ENCODE measurements at regions of chr22 and their contacts with region 1.

Region 1: DNA sequence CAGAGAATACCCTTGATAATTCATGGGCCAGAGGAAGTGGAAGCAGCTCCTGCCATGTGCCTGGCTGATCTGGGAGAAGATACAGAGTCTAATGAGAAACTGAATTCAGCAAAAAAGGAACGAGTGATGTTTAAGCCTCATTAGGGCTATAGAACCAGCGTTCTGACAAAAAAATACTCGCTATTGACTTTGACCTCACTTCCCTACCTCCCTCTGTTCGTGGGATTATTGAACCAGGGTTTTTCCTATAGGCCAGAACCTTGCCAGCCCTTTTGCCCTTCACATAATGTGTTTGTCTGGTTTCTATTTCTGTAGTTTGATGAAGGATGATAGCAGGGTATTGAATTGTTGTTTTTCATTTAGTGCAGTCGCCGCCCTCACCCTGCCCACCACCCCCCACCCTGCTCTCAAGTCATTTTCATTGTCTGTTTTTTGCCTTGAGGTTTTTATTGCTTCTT is 7.6 kb upstream of the RBFOX2 start:
- DNase-seq: no peak
- H3K4me3 ChIP-seq: no peak overlapping the region
- H3K27ac ChIP-seq: no peak overlapping the region
- H3K4me1 ChIP-seq: no peaks in the 10 kb centered on the region
- H3K27me3 ChIP-seq: no peaks in the 10 kb centered on the region
- CTCF ChIP-seq: no peak

Region 2: DNA sequence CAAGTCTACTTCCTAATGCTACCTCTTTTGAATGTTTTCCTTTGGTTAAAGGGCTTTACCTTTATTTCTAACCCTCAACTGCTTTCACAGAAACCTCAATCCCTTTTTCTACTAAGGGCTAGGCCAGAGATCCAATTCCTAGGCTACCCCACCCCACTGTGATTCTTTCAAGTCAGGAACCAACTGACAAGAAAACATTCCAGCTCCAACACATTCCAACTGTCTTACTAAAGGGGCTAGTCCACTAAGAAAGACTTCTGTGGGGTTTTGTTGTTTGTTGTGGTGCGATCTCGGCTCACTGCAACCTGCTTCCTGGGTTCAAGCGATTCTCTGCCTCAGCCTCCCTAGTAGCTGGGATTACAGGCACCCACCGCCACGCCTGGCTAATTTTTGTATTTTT is 167.3 kb before region 1 on chr22:
- CTCF ChIA-PET with region 1: no interaction called
- POLR2A ChIA-PET with region 1: no interaction called
- intact Hi-C with region 1: no loop called
- DNase-seq: no peak
- H3K4me3 ChIP-seq: no peak overlapping the region
- H3K27ac ChIP-seq: peak overlapping the region; percentile 17; the same call in 1 of the 2 replicates
- H3K4me1 ChIP-seq: peaks cover 5% of the 10 kb centered on the region; the same call in 1 of the 2 replicates
- H3K27me3 ChIP-seq: no peaks in the 10 kb centered on the region
- CTCF ChIP-seq: no peak

Region 3: DNA sequence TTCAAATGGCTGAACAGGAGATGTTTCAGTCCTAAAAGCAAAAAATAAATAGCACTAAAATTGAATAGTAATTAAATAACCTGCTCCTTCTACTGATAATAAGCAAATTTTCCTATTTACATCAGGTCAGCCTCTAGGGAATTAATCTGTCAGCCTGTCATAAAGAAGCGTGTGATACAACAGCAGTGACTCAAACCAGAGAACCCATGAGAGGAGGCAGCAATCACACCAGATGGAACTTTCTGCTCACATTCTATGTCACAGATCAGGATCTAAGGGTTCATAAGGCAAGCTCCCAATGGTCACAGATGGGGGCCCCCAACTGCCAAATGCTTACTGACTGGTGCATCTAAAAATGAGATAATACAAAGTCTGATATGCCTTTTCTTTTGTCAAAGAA is 48.7 kb before region 1 on chr22:
- CTCF ChIA-PET with region 1: interaction called, 10 read pairs
- POLR2A ChIA-PET with region 1: no interaction called
- intact Hi-C with region 1: no loop called
- DNase-seq: no peak
- H3K4me3 ChIP-seq: no peak overlapping the region
- H3K27ac ChIP-seq: 0 out of 2 replicates have a peak overlapping the region, but pooled peaks have one; percentile 5
- H3K4me1 ChIP-seq: no peaks in the 10 kb centered on the region
- H3K27me3 ChIP-seq: no peaks in the 10 kb centered on the region
- CTCF ChIP-seq: no peak